PC-9 (cell line): ENCODE measurements at regions of chr19 and their contacts with region 1.

Region 1: DNA sequence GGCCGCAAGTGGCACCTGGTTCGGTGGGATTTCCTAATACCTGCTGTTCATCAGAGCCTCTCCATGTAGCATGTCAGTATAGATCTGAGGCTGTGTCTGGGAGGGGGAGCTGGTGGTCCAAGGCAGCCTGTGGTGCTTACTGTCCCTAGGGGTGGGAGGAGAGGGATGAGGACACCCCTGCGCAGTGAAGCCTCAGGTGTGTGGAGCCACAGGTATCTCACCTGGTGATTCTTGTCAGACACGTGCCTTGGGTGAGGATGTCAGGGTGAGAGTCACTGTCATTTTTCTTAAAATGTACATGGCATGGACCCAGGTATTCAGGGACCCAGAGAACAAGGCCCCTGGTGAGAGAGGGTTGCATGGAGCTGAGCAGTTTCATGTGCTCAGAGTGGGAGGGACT is 11.7 kb downstream of the CEACAM4 start:
- DNase-seq: no peak
- H3K4me3 ChIP-seq: no peak overlapping the region
- H3K27ac ChIP-seq: no peak overlapping the region
- H3K4me1 ChIP-seq: no peaks in the 10 kb centered on the region
- H3K27me3 ChIP-seq: peaks cover 66% of the 10 kb centered on the region
- CTCF ChIP-seq: no peak

Region 2: DNA sequence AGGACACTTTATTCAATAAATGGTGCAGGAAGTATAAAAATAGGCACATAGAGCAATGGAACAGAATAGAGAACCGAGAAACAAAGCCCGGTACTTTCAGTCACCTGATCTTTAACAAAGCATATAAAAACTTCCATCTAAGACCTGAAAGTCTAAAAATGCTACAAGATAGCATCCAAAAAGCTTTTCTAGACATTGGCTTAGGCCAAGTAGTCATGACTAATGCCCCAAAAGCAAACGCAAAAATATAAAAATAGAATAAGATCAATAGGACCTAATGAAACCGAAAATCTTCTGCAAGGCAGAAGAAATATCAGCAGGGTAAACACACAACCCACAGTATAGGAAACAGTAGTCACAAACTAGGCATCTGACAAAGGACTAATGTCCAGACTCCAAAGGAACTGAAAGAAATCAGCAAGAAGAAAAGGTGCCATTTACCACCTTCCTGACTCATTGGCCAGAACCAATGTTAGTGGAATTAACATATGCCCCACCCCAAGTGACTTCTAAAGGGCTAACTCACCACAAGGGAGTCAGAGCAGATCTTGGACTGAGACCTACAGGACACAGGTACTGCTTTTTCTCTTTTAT is 80.1 kb before region 1 on chr19:
- CTCF ChIA-PET with region 1: interaction called, 10 read pairs
- POLR2A ChIA-PET with region 1: no interaction called
- intact Hi-C with region 1: no loop called
- DNase-seq: no peak
- H3K4me3 ChIP-seq: no peak overlapping the region
- H3K27ac ChIP-seq: no peak overlapping the region
- H3K4me1 ChIP-seq: no peaks in the 10 kb centered on the region
- H3K27me3 ChIP-seq: peaks cover 76% of the 10 kb centered on the region
- CTCF ChIP-seq: no peak

Region 3: GRCh38 chr19:41575998-41576397 is 39.2 kb before region 1 on chr19 and contains the start of gene CEACAM21:
- CTCF ChIA-PET with region 1: no interaction called
- POLR2A ChIA-PET with region 1: no interaction called
- intact Hi-C with region 1: no loop called
- DNase-seq: no peak
- H3K4me3 ChIP-seq: no peak within 1 kb of the TSS
- H3K27ac ChIP-seq: no peak within 1 kb of the TSS
- H3K4me1 ChIP-seq: no peaks in the 10 kb centered on the region
- H3K27me3 ChIP-seq: peaks cover 48% of the 10 kb centered on the region
- CTCF ChIP-seq: no peak
- total RNA-seq, gene CEACAM21: not detected in 2 replicates